ENCODE measurements at regions of chr4 and their contacts with region 1.

Region 1: DNA sequence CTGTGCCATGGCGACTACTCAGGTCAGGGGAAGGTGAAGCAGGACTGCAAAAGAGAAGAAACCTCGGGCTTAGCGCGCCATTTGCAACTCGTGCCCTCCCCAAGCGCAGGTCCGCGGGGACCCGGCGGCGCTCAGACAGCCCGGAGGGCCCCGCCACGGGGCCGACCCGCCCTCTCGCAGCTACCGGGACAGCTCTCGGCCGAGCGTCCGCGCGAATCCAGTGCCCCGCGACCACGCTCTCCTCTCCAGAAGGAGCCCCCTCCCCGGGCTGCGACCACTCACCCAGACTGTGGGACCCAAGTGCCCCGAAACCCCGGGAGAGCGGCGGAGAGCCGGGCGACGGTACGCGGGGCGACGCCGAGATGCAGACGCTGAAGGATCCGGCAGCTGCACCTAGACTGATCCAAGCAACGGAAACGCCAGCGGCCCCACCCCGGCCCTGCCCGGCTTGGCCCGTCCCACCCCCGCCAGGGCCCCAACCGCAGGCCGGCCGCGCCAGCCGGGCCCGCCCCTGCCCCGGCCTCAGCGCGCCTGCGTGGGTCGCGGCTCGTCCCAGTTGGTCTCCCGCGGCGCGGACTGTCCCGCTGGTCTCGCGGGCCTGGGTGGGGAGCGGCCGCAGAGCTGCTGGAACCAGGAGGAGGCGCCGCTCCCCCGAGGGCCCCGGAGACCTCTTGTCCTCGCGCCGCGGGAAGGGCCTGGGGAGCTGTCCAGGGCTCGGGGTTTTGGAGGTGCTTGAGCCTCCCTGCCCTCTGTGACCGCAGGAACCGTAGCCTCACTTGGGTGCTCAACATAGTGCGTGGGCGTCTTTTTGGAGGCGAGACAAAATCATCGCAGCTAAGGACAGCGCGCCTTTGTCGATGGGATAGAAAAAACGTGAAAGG is at the start of gene ANXA5:
- DNase-seq: peak; percentile 90

Region 2: DNA sequence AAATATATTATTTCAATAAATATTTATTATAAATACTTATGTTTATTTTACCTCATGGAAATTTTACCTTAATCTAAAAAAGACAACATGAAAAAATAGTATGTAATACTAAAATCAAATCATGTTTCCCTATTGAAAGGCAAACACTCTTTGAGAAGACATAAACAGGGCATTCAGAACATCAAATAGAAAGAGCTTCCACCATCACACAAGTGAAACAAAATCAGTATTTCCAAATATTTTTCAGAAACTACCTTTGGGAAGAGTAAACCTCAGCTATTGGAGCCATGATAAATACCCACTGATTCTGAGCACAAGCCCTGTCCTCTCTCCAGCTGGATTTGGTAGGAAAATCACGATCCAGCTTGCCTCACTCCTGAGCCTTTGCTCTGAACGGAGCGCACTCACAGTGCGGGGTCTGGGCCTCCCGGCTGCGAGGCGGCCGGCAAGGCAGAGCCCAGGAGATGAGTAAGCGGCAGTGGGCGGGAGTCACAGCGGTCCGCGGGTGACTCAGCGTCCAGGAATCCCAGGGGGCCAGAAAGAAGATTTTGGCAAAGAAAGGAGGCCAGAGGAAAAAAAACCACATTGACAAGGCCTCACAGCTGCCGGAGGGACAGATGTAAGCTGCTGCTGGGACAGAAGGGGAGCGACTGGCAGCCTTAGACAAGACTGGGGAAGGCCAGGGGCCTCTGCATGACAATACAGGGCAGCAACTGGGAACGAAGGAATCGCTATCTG is 14.6 kb after region 1 on chr4:
- CTCF ChIA-PET with region 1: interaction called, 3 read pairs
- POLR2A ChIA-PET with region 1: interaction called, 16 read pairs
- DNase-seq: peak; percentile 77

Region 3: GRCh38 chr4:121923306-121923705 is 226.5 kb after region 1 on chr4:
- CTCF ChIA-PET with region 1: no interaction called
- POLR2A ChIA-PET with region 1: no interaction called
- DNase-seq: no peak

Measured in HEK293T (cell line).